IMR-90 (cell line): ENCODE measurements at regions of chr1 and their contacts with region 1.

Region 1: DNA sequence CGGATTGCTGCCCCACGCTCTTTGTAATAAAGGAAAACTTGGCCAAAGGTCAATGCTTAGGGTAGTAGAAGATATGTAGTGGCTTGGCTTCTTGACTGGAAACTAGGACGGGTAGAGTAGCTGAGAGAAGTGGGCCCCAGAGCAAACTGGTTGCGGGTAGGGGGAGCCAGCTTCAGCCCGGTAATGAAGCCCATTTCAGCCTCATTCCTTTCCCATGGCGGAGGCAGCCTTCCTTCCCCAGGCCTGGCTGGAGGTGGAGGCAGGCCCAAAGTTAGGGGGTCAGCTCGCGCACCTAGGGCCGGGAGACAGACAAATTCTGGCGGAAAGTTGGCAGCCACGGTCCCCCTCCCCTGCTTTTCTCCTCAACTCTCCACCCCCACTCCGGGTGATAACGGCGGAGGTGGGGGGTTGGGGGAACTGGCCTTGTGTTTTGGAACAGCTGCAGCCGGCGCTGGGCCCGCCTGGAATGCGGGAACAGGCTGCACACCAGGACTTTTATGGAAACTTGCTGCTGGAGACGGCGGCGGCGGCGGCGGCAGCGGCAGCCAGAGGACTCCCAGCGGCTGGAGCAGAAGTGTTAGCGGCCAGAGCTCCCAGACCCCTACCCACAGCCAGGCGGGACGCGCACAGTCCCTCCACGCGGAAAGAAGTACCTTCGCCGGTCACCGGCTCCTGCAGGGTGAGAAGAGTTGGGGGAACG is at the start of gene NEXN:
- DNase-seq: peak; percentile 79
- ATAC-seq: peak; percentile 74
- H3K4me3 ChIP-seq: peak within 1 kb of the TSS; percentile 98
- H3K27ac ChIP-seq: peak within 1 kb of the TSS; percentile 99
- H3K4me1 ChIP-seq: peaks cover 9% of the 10 kb centered on the region
- H3K27me3 ChIP-seq: no peaks in the 10 kb centered on the region
- CTCF ChIP-seq: no peak
- POLR2A ChIP-seq: no peak; the same call in 1 of the 2 replicates
- RAD21 ChIP-seq: no peak
- total RNA-seq, gene NEXN: 5.2 and 10.3 TPM in 2 replicates

Region 2: GRCh38 chr1:77739235-77739634 is 149.0 kb before region 1 on chr1:
- CTCF ChIA-PET with region 1: no interaction called
- POLR2A ChIA-PET with region 1: no interaction called
- dilution Hi-C with region 1: no loop called
- in situ Hi-C with region 1: no loop called
- intact Hi-C with region 1: no loop called
- DNase-seq: no peak
- ATAC-seq: no peak
- H3K4me3 ChIP-seq: no peak overlapping the region
- H3K27ac ChIP-seq: no peak overlapping the region
- H3K4me1 ChIP-seq: no peaks in the 10 kb centered on the region
- H3K27me3 ChIP-seq: no peaks in the 10 kb centered on the region
- CTCF ChIP-seq: no peak
- POLR2A ChIP-seq: no peak
- RAD21 ChIP-seq: no peak

Region 3: GRCh38 chr1:77759071-77760028 is 128.9 kb before region 1 on chr1 and contains the start of gene USP33:
- CTCF ChIA-PET with region 1: no interaction called
- POLR2A ChIA-PET with region 1: interaction called, 5 read pairs
- dilution Hi-C with region 1: no loop called
- in situ Hi-C with region 1: no loop called
- intact Hi-C with region 1: loop called (anchors 2 kb)
- DNase-seq: peak; percentile 66
- ATAC-seq: peak; percentile 98
- H3K4me3 ChIP-seq: peak within 1 kb of the TSS; percentile 86
- H3K27ac ChIP-seq: peak within 1 kb of the TSS; percentile 82
- H3K4me1 ChIP-seq: peaks cover 4% of the 10 kb centered on the region
- H3K27me3 ChIP-seq: no peaks in the 10 kb centered on the region
- CTCF ChIP-seq: no peak
- POLR2A ChIP-seq: no peak
- RAD21 ChIP-seq: no peak
- total RNA-seq, gene USP33: 64.5 and 89.4 TPM in 2 replicates

Region 4: DNA sequence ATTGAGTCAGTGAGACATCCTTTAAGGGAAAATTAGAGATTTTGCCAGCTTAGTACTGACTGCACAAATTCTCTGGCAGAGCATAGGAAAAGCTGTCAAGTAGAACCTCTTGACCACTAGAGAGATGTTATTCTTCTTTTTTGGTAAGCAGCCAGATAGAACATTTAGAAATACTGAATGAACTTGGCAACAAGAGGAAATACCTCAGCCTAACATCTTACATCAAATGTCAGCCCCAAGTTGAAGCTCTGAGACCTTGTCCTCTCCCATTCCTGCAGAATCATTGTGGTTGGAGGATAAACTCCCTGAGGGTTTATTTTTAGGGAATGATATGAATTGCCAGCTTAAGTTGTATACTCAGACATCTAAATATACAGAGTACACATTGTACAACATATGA is 55.3 kb before region 1 on chr1:
- CTCF ChIA-PET with region 1: interaction called, 7 read pairs
- POLR2A ChIA-PET with region 1: interaction called, 15 read pairs
- dilution Hi-C with region 1: no loop called
- in situ Hi-C with region 1: no loop called
- intact Hi-C with region 1: loop called (anchors 2 kb)
- DNase-seq: peak; percentile 97
- ATAC-seq: peak; percentile 77
- H3K4me3 ChIP-seq: no peak overlapping the region
- H3K27ac ChIP-seq: no peak overlapping the region; the same call in 1 of the 2 replicates
- H3K4me1 ChIP-seq: peaks cover 15% of the 10 kb centered on the region
- H3K27me3 ChIP-seq: no peaks in the 10 kb centered on the region
- CTCF ChIP-seq: no peak
- POLR2A ChIP-seq: no peak
- RAD21 ChIP-seq: no peak